Activated CD4-positive, alpha-beta T cell treated with anti-CD3 and anti-CD28 coated beads, Interleukin-2, amount 10 ng/mL, durations not matched to agents 24 days and 14 days (primary cell): ENCODE measurements at regions of chr6 and their contacts with region 1.

Region 1: GRCh38 chr6:41735427-41736356 is at the start of gene TFEB:
- DNase-seq: peak; percentile 99
- H3K4me3 Mint-ChIP-seq: peak within 1 kb of the TSS; percentile 86
- H3K27ac Mint-ChIP-seq: peak within 1 kb of the TSS; percentile 62
- H3K4me1 Mint-ChIP-seq: peaks cover 30% of the 10 kb centered on the region
- H3K27me3 Mint-ChIP-seq: no peaks in the 10 kb centered on the region
- total RNA-seq, gene TFEB: 14.1 and 14.9 TPM in 2 replicates

Region 2: GRCh38 chr6:41705996-41706835 is 29.5 kb before region 1 on chr6:
- intact Hi-C with region 1: loop called (anchors 2 kb)
- DNase-seq: peak; percentile 85
- H3K4me3 Mint-ChIP-seq: peak overlapping the region; percentile 22
- H3K27ac Mint-ChIP-seq: peak overlapping the region; percentile 83
- H3K4me1 Mint-ChIP-seq: peaks cover 29% of the 10 kb centered on the region
- H3K27me3 Mint-ChIP-seq: no peaks in the 10 kb centered on the region

Region 3: DNA sequence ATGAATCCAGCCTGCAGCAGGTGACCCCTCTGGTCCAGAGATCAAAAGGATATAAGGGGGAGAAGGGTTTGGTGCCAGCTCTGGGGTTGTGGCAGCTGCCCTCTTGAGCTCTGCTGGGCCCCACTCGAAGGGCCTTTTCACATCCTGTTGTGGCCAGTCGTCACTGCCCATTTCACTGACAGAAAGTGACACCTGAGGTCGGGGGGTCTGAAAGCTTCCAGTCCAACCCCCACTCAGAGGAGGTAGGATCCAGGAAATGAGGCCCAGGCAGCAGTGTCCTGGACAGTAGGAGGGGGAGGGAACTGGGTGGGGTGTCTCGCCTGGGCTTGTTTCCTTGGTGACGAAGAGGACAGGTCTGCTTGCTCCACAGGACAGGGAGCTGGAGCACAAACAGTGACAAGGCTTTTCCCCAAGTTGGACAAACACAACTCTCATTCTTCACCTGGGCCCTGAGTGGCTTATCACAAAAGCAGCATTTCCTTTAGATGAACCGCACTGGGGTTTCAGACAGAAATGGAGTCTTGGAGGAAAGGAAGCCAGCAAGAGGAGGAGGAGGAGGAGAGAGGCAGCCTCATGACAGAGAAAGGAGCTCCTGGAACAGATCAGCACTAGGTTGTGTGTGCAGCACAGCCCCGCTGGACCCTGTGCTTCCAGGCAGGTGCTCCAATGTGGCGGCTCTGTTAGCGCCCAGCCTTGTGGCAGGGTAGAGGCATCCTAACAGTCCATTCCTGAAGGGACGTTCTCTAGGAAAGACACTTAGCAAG is 33.0 kb after region 1 on chr6:
- intact Hi-C with region 1: no loop called
- DNase-seq: no peak
- H3K4me3 Mint-ChIP-seq: no peak overlapping the region
- H3K27ac Mint-ChIP-seq: peak overlapping the region; percentile 39
- H3K4me1 Mint-ChIP-seq: peaks cover 10% of the 10 kb centered on the region
- H3K27me3 Mint-ChIP-seq: peaks cover 1% of the 10 kb centered on the region

Region 4: GRCh38 chr6:41779793-41780545 is 44.3 kb after region 1 on chr6 and contains the start of gene FRS3:
- intact Hi-C with region 1: loop called (anchors 1 kb)
- DNase-seq: peak; percentile 100
- H3K4me3 Mint-ChIP-seq: peak within 1 kb of the TSS; percentile 96
- H3K27ac Mint-ChIP-seq: peak within 1 kb of the TSS; percentile 81
- H3K4me1 Mint-ChIP-seq: peaks cover 22% of the 10 kb centered on the region
- H3K27me3 Mint-ChIP-seq: peaks cover 19% of the 10 kb centered on the region
- total RNA-seq, gene FRS3: 4.7 and 6.8 TPM in 2 replicates

Region 5: DNA sequence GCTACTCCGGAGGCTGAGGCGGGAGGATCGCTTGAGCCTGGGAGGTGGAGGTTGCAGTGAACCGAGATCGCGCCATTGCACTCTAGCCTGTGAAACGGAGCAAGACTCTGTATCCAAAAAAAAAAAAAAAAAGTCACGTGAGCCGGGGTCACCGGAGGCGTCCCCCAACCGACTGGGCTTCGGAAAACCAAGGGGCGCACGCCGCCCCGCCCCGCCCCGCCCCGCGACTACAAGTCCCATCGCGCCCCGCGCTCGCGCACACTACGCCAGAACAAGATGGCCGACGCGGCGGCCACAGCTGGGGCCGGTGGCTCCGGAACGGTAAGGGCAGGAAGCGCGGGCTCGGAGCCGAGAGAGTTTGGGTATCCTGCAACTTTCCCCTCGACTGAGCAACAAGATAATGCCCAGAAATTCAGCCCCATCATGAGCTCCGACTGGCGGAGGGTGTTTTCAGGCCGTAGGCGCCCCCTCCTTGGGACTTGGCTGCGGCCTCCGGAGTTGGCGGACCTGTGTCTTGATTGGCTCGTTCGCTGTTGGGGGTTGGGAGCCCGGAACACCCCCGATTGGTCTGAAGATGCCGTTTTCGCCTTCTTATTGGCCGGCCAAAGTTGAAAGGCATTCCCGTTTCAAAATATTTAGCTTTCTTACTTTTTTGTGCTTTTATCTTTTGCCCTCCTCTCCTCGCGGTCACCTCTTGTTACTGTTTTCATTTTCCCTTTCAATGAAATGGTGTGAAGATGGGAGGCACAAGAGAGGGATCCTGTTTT is 314.8 kb after region 1 on chr6 and contains the start of gene TAF8:
- intact Hi-C with region 1: loop called (anchors 1 kb)
- DNase-seq: peak; percentile 97
- H3K4me3 Mint-ChIP-seq: peak within 1 kb of the TSS; percentile 98
- H3K27ac Mint-ChIP-seq: peak within 1 kb of the TSS; percentile 99
- H3K4me1 Mint-ChIP-seq: peaks cover 65% of the 10 kb centered on the region
- H3K27me3 Mint-ChIP-seq: no peaks in the 10 kb centered on the region
- total RNA-seq, gene TAF8: 38.1 and 38.7 TPM in 2 replicates